H1 (cell line): ENCODE measurements at regions of chr1 and their contacts with region 1.

Region 1: DNA sequence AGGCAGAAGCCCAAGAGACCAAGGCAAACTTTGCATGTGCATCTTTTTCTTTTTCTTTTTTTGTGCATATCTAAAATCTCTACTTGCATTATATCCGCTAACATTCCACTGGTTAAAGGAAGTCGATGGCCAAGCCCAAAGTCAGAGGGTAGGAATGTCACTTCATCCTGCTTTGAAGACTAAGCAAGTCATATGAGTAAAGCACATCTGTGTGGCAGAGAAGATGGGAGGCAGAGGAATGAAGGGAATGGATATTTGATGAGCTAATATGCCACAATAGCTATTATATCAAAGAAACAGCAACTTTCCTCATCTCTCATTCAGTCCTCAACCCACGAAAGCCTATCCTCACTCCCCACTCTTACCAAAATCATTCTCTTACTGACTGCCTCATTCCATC is 59.3 kb downstream of the RNF220 start:
- DNase-seq: no peak
- H3K4me3 ChIP-seq: no peak overlapping the region
- H3K27ac ChIP-seq: no peak overlapping the region
- H3K4me1 ChIP-seq: no peaks in the 10 kb centered on the region
- H3K27me3 ChIP-seq: no peaks in the 10 kb centered on the region
- CTCF ChIP-seq: no peak
- EP300 ChIP-seq: no peak
- POLR2A ChIP-seq: no peak
- RAD21 ChIP-seq: no peak

Region 2: DNA sequence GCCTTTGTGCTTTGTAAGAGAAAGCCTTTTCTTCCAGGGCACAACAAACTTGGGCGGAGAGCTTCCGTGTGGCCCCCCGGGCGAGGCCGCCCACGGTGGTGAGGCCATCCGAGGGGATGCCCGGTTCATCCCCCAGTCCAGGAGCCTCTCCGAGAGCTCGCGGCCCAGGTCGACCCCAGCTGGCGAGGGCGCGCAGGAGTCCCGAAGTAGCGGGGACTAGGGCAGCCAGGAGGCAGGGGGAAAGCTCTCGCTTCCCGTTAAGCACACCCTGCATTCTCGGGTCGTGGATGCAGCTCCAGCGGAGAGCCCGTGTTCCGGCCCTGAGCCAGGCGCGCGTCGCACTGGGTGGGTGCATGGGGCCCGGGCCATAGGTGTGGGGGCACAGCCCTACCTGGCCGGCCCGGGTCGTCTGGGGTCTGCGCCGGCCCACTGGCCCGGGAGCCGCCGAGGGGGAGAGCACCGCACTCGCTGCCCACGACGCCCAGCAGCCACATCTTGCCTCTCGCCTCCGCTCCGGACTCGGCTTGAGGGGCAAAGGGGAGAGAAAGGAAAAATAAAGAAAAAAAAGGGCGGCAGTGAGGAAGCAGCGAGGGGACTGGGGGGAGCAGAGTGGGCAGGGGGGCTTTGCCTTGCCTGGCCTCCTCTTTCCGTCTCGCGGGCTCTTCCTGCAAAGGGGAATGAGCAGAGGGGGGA is 57.5 kb before region 1 on chr1:
- CTCF ChIA-PET with region 1: no interaction called
- POLR2A ChIA-PET with region 1: no interaction called
- DNase-seq: peak in 1 of 2 experiments; percentile 74
- H3K4me3 ChIP-seq: peak overlapping the region; percentile 66 to 96 (median 78)
- H3K27ac ChIP-seq: no peak overlapping the region
- H3K4me1 ChIP-seq: peaks cover 0 to 6% (median 5%) of the 10 kb centered on the region in 4 experiments; a peak in 4 of 7 replicates
- H3K27me3 ChIP-seq: peaks cover 8 to 47% (median 32%) of the 10 kb centered on the region in 4 experiments; a peak in 6 of 7 replicates
- CTCF ChIP-seq: no peak
- EP300 ChIP-seq: no peak
- POLR2A ChIP-seq: no peak
- RAD21 ChIP-seq: no peak

Region 3: DNA sequence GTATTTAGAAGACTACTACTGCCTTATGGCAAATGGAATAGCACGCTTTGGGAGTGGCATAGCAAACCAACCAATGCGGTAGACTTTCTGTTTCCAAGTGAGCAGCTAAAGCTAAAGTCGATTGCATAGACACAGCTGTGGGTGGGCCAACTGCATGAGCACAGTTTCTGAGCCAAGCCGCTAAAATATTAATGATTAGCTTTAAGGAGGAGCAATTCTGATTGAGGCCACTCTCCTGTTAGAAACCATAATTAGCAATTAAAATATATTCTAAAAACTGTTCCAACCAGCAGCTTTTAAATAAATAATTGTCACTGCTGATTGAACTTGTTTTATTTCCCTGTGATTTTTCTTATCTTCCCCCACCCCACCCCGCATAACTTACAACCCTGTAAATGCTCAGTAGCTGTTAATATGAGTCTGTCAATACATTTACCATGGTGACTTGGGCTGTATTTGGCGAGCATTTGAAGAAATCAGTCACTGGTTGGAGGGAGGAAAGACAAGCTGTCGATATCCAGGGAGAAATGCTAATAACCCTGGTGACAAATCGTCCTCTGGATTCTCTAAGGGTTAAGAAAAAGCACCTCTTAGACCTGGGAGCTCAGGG is 27.1 kb before region 1 on chr1:
- CTCF ChIA-PET with region 1: interaction called, 11 read pairs
- POLR2A ChIA-PET with region 1: interaction called, 5 read pairs
- DNase-seq: no peak
- H3K4me3 ChIP-seq: no peak overlapping the region
- H3K27ac ChIP-seq: no peak overlapping the region
- H3K4me1 ChIP-seq: peaks cover 0 to 10% (median 7%) of the 10 kb centered on the region in 4 experiments; a peak in 4 of 7 replicates
- H3K27me3 ChIP-seq: no peaks in the 10 kb centered on the region
- CTCF ChIP-seq: no peak
- EP300 ChIP-seq: no peak
- POLR2A ChIP-seq: no peak
- RAD21 ChIP-seq: no peak